CD8-positive, alpha-beta T cell (primary cell): ENCODE measurements at regions of chr6 and their contacts with region 1.

Region 1: DNA sequence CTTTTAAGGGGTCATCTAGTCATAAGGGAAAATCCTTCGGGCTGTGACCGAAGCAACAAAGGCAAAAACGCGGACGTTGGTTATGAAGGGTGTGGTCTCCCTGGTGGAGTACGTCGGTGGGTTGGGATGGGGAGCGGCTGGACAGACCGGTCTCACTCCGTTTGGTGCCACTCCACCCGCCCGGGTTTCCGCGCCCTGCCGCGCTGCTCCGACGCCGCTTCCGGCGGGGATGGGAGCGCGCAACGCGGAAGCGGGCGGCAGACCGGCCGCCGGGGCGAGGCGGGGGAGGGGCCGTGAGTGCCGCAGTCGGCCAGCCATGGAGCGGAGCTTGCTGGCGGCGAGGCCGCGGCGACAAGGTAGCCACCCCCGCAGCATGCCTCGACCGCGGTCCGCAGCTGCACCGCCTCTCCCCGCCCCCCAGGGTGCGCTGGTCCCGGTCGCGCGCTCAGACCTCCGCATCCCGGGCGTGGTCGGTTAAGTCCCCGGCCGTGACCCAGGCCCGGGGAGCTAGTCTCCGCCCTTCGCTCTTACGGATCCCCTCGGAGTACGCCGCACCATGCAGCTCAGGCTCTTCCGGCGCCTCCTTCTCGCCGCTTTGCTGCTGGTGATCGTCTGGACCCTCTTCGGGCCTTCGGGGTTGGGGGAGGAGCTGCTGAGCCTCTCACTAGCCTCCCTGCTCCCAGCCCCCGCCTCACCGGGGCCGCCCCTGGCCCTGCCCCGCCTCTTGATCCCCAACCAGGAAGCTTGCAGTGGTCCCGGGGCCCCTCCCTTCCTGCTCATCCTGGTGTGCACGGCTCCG is at the start of gene B3GALT4:
- DNase-seq: peak; percentile 28 to 88 (median 68)
- ATAC-seq: peak; percentile 67
- H3K4me3 ChIP-seq: peak within 1 kb of the TSS; percentile 93 to 95
- H3K4me3 Mint-ChIP-seq: peak within 1 kb of the TSS; percentile 89
- H3K27ac ChIP-seq: peak within 1 kb of the TSS; percentile 79 to 95
- H3K27ac Mint-ChIP-seq: peak within 1 kb of the TSS; percentile 92
- H3K4me1 ChIP-seq: peaks cover 61% of the 10 kb centered on the region
- H3K4me1 Mint-ChIP-seq: peaks cover 71% of the 10 kb centered on the region
- H3K27me3 ChIP-seq: no peaks in the 10 kb centered on the region
- H3K27me3 Mint-ChIP-seq: no peaks in the 10 kb centered on the region
- CTCF ChIP-seq: peak; percentile 55
- total RNA-seq, gene B3GALT4: 7.9 to 8.8 TPM

Region 2: GRCh38 chr6:33312409-33313158 is 35.5 kb after region 1 on chr6:
- CTCF ChIA-PET with region 1: no interaction called
- POLR2A ChIA-PET with region 1: interaction called, 15 read pairs
- intact Hi-C with region 1: loop called in 1 of 2 experiments (anchors 1 kb)
- DNase-seq: peak; percentile 68 to 96 (median 84)
- ATAC-seq: peak; percentile 51
- H3K4me3 ChIP-seq: peak overlapping the region; percentile 95 to 100
- H3K4me3 Mint-ChIP-seq: peak overlapping the region; percentile 98
- H3K27ac ChIP-seq: peak overlapping the region; percentile 86 to 99
- H3K27ac Mint-ChIP-seq: peak overlapping the region; percentile 97
- H3K4me1 ChIP-seq: peaks cover 41% of the 10 kb centered on the region
- H3K4me1 Mint-ChIP-seq: peaks cover 57% of the 10 kb centered on the region
- H3K27me3 ChIP-seq: no peaks in the 10 kb centered on the region
- H3K27me3 Mint-ChIP-seq: no peaks in the 10 kb centered on the region
- CTCF ChIP-seq: no peak

Region 3: GRCh38 chr6:33417903-33418689 is 141.0 kb after region 1 on chr6 and contains the start of gene CUTA:
- CTCF ChIA-PET with region 1: no interaction called
- POLR2A ChIA-PET with region 1: interaction called, 4 read pairs
- intact Hi-C with region 1: loop called in 1 of 2 experiments (anchors 2 kb)
- DNase-seq: peak; percentile 96 to 100 (median 99)
- ATAC-seq: peak; percentile 87
- H3K4me3 ChIP-seq: peak within 1 kb of the TSS; percentile 68 to 70
- H3K4me3 Mint-ChIP-seq: peak within 1 kb of the TSS; percentile 94
- H3K27ac ChIP-seq: peak within 1 kb of the TSS; percentile 83 to 88
- H3K27ac Mint-ChIP-seq: peak within 1 kb of the TSS; percentile 97
- H3K4me1 ChIP-seq: peaks cover 68% of the 10 kb centered on the region
- H3K4me1 Mint-ChIP-seq: peaks cover 83% of the 10 kb centered on the region
- H3K27me3 ChIP-seq: no peaks in the 10 kb centered on the region
- H3K27me3 Mint-ChIP-seq: no peaks in the 10 kb centered on the region
- CTCF ChIP-seq: peak; percentile 27
- total RNA-seq, gene CUTA: 159 to 177 TPM